HepG2 (cell line): ENCODE measurements at regions of chr1 and their contacts with region 1.

Region 1: GRCh38 chr1:19341201-19342072 is 29.3 kb downstream of the SLC66A1 start:
- DNase-seq: peak; percentile 48
- ATAC-seq: peak; percentile 8; the same call in 2 of the 3 replicates
- H3K4me3 ChIP-seq: no peak overlapping the region
- H3K27ac ChIP-seq: no peak overlapping the region
- H3K4me1 ChIP-seq: peaks cover 36% of the 10 kb centered on the region
- H3K27me3 ChIP-seq: no peaks in the 10 kb centered on the region
- CTCF ChIP-seq: peak; percentile 72
- EP300 ChIP-seq: no peak
- POLR2A ChIP-seq: no peak
- RAD21 ChIP-seq: no peak

Region 2: GRCh38 chr1:19367584-19368041 is 26.2 kb after region 1 on chr1:
- CTCF ChIA-PET with region 1: no interaction called
- POLR2A ChIA-PET with region 1: no interaction called
- in situ Hi-C with region 1: no loop called
- intact Hi-C with region 1: no loop called
- DNase-seq: no peak
- ATAC-seq: no peak
- H3K4me3 ChIP-seq: no peak overlapping the region
- H3K27ac ChIP-seq: no peak overlapping the region
- H3K4me1 ChIP-seq: peaks cover 15% of the 10 kb centered on the region; the same call in 1 of the 2 replicates
- H3K27me3 ChIP-seq: no peaks in the 10 kb centered on the region
- CTCF ChIP-seq: no peak
- EP300 ChIP-seq: no peak
- POLR2A ChIP-seq: no peak
- RAD21 ChIP-seq: no peak

Region 3: DNA sequence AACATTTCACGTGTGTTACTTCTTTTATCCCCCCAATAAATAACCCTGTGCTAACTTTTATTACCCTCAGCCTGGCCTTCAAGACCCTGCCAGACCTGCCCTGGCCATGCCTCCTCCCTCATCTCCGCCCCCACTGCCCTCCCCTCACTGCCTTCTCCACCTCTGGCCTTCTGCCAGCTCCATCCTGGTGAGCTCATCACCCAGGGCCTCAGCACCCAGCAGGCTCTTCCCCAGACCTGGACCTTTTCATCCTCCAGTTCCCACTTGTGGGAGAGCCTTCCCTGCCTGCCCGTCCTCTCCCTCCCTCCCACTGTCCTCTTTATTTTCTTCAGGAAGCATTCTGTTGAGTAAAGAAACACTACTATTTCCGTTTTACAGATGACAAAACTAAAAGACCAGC is 42.7 kb after region 1 on chr1:
- CTCF ChIA-PET with region 1: interaction called, 3 read pairs
- POLR2A ChIA-PET with region 1: interaction called, 3 read pairs
- in situ Hi-C with region 1: loop called (anchors 5 kb)
- intact Hi-C with region 1: loop called (anchors 1 kb)
- DNase-seq: no peak
- ATAC-seq: no peak
- H3K4me3 ChIP-seq: no peak overlapping the region
- H3K27ac ChIP-seq: no peak overlapping the region
- H3K4me1 ChIP-seq: peaks cover 52% of the 10 kb centered on the region
- H3K27me3 ChIP-seq: no peaks in the 10 kb centered on the region
- CTCF ChIP-seq: no peak
- EP300 ChIP-seq: no peak
- POLR2A ChIP-seq: no peak
- RAD21 ChIP-seq: no peak

Region 4: DNA sequence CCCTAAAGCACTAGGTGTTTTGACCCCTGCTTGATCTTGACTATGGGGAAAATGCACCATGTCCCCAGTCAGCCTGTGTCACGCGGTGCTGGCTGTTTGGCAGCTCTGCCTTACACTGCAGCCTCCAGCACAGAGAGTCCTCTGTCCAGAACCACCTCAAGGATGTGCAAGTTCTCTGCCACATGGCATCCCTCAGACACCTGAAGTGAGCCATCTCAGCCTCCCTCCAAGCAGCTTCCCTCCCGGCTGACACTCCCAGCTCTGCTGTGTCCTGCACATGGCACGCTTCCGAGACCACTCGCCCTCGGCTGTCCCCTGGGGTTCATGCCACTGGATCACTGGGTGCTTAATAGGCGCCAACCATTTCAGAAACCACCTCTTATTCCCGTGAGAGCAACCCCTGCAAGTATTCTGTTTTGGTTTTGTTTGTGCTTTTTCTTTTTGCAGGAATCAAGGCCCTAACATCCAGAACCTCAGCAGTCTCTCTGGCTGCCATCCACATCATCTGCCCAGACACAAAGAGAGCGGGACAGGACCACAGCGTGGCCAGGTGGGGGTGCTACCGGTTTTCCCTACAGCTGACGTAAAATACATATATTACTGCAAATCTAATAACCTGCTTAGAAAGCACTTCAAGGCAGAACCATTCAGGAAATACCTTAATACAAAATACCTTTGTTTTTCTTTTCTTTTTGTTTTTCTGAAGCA is 98.2 kb after region 1 on chr1:
- CTCF ChIA-PET with region 1: no interaction called
- POLR2A ChIA-PET with region 1: no interaction called
- in situ Hi-C with region 1: no loop called
- intact Hi-C with region 1: no loop called
- DNase-seq: no peak
- ATAC-seq: no peak
- H3K4me3 ChIP-seq: no peak overlapping the region
- H3K27ac ChIP-seq: peak overlapping the region; percentile 26
- H3K4me1 ChIP-seq: peaks cover 94% of the 10 kb centered on the region
- H3K27me3 ChIP-seq: no peaks in the 10 kb centered on the region
- CTCF ChIP-seq: no peak; the same call in 1 of the 2 replicates
- EP300 ChIP-seq: no peak
- POLR2A ChIP-seq: no peak
- RAD21 ChIP-seq: no peak

Region 5: DNA sequence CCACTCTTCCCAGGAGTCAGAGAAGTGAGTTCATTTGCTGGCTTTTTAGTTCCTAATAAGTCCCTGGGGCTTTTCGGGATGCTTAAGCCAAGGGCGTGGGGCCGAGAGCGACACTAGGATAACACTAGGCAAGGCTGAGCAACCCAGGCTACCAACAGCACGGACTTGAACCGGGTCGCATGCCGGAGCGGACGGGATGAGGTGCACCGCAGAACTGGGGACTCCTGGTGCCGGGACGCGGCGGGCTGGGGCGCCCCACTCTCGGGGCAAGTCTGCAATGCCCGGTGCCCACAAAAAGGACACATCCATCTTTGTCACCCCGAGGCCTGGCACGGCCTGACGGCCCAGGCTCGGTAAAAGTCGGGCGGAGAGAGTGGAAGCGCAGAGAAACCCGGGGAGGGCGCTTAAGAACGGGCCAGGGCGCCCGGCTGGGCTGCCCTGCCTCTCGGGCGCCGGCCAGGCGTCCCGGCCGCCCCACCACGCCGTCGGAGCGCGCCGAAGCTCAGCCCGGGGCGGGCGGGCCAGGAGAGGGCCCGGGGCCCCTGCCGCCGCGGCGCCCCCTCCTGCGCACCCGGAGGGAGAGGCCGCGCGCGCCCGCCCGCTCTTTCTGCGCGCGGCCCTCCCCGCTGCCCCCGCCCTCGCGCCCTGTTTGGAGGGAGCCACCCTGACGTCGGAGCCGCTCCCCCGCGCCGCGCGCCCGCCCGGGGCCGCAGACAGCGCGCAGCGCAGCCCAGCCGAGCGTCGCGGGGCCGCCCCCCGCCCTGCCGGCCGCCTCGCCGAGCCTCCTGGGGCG is 302.4 kb after region 1 on chr1 and contains the start of gene NBL1:
- CTCF ChIA-PET with region 1: no interaction called
- POLR2A ChIA-PET with region 1: no interaction called
- in situ Hi-C with region 1: loop called (anchors 5 kb)
- intact Hi-C with region 1: no loop called
- DNase-seq: no peak
- ATAC-seq: peak; percentile 8
- H3K4me3 ChIP-seq: peak within 1 kb of the TSS; percentile 68 to 83 (median 75)
- H3K27ac ChIP-seq: no peak within 1 kb of the TSS
- H3K4me1 ChIP-seq: peaks cover 53% of the 10 kb centered on the region
- H3K27me3 ChIP-seq: peaks cover 2 to 21% of the 10 kb centered on the region in 2 experiments; a peak in 3 of 5 replicates
- CTCF ChIP-seq: no peak
- EP300 ChIP-seq: no peak
- POLR2A ChIP-seq: no peak
- RAD21 ChIP-seq: no peak
- total RNA-seq, gene NBL1: 1.9 and 2.7 TPM in 2 replicates

Region 6: GRCh38 chr1:19651141-19651737 is 309.8 kb after region 1 on chr1:
- CTCF ChIA-PET with region 1: interaction called, 11 read pairs
- POLR2A ChIA-PET with region 1: no interaction called
- in situ Hi-C with region 1: loop called (anchors 5 kb)
- intact Hi-C with region 1: loop called (anchors 1 kb)
- DNase-seq: peak; percentile 24
- ATAC-seq: peak; percentile 90
- H3K4me3 ChIP-seq: peak overlapping the region in 1 of 3 experiments; percentile 39; a peak in 1 of 6 replicates
- H3K27ac ChIP-seq: no peak overlapping the region
- H3K4me1 ChIP-seq: peaks cover 29% of the 10 kb centered on the region
- H3K27me3 ChIP-seq: no peaks in the 10 kb centered on the region
- CTCF ChIP-seq: peak; percentile 96
- EP300 ChIP-seq: no peak
- POLR2A ChIP-seq: no peak
- RAD21 ChIP-seq: peak; percentile 95